Psoas muscle (tissue), 8 donors: ENCODE measurements at regions of chr12 and their contacts with region 1.

Region 1: DNA sequence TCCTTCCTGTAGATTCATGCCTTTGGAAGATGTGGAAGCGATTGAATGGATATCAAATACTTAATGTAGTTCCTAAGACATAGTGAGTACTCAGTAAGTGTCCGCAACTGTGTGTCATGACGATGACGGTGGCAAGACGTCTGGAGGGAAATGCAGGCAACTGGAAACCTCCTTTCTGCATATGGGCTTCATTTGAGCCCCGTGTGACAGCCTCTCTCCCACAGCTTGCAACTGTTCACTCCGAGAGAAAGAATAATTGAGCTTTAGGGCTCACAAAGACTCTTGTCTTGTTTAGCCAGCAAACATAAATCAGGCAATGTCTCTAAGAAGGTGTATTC is 6.9 kb downstream of the CFAP251 start:
- DNase-seq: no peak
- ATAC-seq: peak; percentile 34 to 67 (median 50)
- H3K4me3 ChIP-seq: peak overlapping the region; percentile 26
- H3K27ac ChIP-seq: peak overlapping the region; percentile 79
- H3K4me1 ChIP-seq: peaks cover 21% of the 10 kb centered on the region
- H3K27me3 ChIP-seq: no peaks in the 10 kb centered on the region
- CTCF ChIP-seq: no peak

Region 2: GRCh38 chr12:121866331-121866730 is 59.0 kb before region 1 on chr12:
- intact Hi-C with region 1: no loop called
- DNase-seq: no peak
- ATAC-seq: no peak
- H3K4me3 ChIP-seq: no peak overlapping the region
- H3K27ac ChIP-seq: no peak overlapping the region
- H3K4me1 ChIP-seq: peaks cover 13% of the 10 kb centered on the region
- H3K27me3 ChIP-seq: no peaks in the 10 kb centered on the region
- CTCF ChIP-seq: no peak

Region 3: GRCh38 chr12:121888478-121889266 is 36.7 kb before region 1 on chr12 and contains the start of gene PSMD9:
- intact Hi-C with region 1: no loop called
- DNase-seq: peak; percentile 98 to 99
- ATAC-seq: peak; percentile 98 to 100 (median 98)
- H3K4me3 ChIP-seq: peak within 1 kb of the TSS; percentile 72
- H3K27ac ChIP-seq: peak within 1 kb of the TSS; percentile 88
- H3K4me1 ChIP-seq: peaks cover 21% of the 10 kb centered on the region
- H3K27me3 ChIP-seq: no peaks in the 10 kb centered on the region
- CTCF ChIP-seq: peak; percentile 65
- total RNA-seq, gene PSMD9: 20.1 to 34.0 (median 25.5) TPM

Region 4: GRCh38 chr12:122009741-122010140 is 84.4 kb after region 1 on chr12:
- intact Hi-C with region 1: no loop called
- DNase-seq: no peak
- ATAC-seq: no peak
- H3K4me3 ChIP-seq: no peak overlapping the region
- H3K27ac ChIP-seq: no peak overlapping the region
- H3K4me1 ChIP-seq: peaks cover 23% of the 10 kb centered on the region
- H3K27me3 ChIP-seq: no peaks in the 10 kb centered on the region
- CTCF ChIP-seq: no peak

Region 5: GRCh38 chr12:122021822-122022526 is 96.6 kb after region 1 on chr12 and contains the start of gene BCL7A:
- intact Hi-C with region 1: loop called in 1 of 2 experiments (anchors 10 kb)
- DNase-seq: peak; percentile 71 to 85
- ATAC-seq: peak; percentile 74 to 83 (median 77)
- H3K4me3 ChIP-seq: peak within 1 kb of the TSS; percentile 87
- H3K27ac ChIP-seq: peak within 1 kb of the TSS; percentile 90
- H3K4me1 ChIP-seq: peaks cover 26% of the 10 kb centered on the region
- H3K27me3 ChIP-seq: no peaks in the 10 kb centered on the region
- CTCF ChIP-seq: no peak
- total RNA-seq, gene BCL7A: 11.3 to 14.3 (median 12.5) TPM

Region 6: DNA sequence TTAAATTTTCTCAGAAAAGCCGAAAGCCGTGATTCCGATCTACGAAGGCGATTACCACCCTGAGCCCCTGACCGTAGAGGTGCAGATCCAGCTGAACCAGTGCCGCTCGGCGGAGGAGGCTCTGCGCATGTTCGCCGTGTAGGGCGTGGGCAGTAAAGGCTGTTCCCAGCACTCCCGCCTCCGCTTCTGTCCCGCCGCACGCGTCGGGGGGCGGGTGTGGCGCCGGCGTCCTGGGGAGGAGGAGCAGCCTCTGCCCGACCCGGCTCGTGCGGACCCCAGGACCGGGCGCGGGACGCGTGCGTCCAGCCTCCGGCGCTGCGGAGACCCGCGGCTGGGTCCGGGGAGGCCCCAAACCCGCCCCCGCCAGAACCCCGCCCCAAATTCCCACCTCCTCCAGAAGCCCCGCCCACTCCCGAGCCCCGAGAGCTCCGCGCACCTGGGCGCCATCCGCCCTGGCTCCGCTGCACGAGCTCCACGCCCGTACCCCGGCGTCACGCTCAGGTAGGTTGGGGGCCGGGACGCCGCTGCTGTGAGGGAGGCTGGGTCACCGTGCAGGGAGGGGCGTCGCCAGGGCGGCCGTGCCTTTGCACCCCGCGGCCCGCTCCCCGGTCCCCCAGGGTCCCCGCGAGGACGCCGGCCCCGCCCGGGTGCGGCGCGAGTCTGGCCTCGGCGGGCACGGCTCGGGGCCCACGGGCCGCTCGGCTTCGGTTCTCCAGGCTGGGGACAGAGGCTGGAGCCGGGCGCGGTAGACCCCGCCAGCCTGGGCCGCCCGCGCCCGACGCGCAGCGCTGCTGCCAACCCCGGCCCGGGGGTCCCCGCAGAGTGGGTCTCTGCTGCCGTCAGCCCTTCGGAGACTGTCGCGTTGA is 278.2 kb after region 1 on chr12 and contains the start of gene B3GNT4:
- intact Hi-C with region 1: loop called in 1 of 2 experiments (anchors 10 kb)
- DNase-seq: peak; percentile 56 to 71
- ATAC-seq: peak; percentile 45 to 65 (median 59)
- H3K4me3 ChIP-seq: peak within 1 kb of the TSS; percentile 71
- H3K27ac ChIP-seq: no peak within 1 kb of the TSS
- H3K4me1 ChIP-seq: no peaks in the 10 kb centered on the region
- H3K27me3 ChIP-seq: peaks cover 0 to 52% (median 23%) of the 10 kb centered on the region in 3 donors
- CTCF ChIP-seq: no peak
- total RNA-seq, gene B3GNT4: 0.38 TPM in 1 of 4 donors, not detected in the others